CD4-positive, alpha-beta T cell (primary cell): ENCODE measurements at regions of chr2 and their contacts with region 1.

Region 1: DNA sequence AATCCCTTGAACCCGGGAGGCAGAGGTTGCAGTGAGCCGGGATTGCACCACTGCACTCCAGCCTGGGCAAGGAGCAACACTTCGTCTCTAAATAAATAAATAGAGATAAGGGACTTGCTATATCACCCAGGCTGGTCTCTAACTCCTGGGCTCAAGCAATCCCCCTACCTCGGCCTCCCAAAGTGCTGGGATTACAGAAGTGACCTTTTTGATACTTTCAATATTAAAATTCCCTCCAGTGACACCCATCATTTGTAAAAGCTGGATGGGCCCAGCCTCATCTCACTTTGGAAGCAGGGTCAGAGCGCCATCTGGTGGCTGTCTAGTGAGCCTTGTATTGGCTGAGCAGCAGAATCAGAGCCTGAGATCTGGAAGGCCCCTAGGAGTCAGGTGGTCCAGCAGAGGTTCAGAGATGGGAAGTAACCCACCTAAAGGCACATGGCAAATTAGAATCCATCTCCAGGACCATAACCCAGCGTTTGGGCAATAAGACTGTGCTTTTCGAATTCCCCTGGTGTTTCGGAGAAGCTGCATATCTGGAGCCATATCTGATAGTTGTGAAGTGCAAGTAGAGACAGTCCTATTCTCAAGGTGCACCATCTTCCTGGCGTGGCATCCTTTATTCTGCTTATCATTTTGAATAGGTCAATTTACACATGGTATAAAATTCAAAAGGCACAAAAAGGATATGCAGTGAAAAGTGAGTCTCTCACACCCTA is 18.3 kb upstream of the SLC35F6 start:
- DNase-seq: peak; percentile 61 to 87 (median 72)
- ATAC-seq: peak; percentile 78
- H3K4me3 ChIP-seq: no peak overlapping the region
- H3K4me3 Mint-ChIP-seq: no peak overlapping the region
- H3K27ac ChIP-seq: no peak overlapping the region
- H3K27ac Mint-ChIP-seq: no peak overlapping the region
- H3K4me1 ChIP-seq: no peaks in the 10 kb centered on the region
- H3K4me1 Mint-ChIP-seq: peaks cover 4% of the 10 kb centered on the region
- H3K27me3 ChIP-seq: no peaks in the 10 kb centered on the region
- H3K27me3 Mint-ChIP-seq: no peaks in the 10 kb centered on the region
- CTCF ChIP-seq: peak; percentile 93

Region 2: DNA sequence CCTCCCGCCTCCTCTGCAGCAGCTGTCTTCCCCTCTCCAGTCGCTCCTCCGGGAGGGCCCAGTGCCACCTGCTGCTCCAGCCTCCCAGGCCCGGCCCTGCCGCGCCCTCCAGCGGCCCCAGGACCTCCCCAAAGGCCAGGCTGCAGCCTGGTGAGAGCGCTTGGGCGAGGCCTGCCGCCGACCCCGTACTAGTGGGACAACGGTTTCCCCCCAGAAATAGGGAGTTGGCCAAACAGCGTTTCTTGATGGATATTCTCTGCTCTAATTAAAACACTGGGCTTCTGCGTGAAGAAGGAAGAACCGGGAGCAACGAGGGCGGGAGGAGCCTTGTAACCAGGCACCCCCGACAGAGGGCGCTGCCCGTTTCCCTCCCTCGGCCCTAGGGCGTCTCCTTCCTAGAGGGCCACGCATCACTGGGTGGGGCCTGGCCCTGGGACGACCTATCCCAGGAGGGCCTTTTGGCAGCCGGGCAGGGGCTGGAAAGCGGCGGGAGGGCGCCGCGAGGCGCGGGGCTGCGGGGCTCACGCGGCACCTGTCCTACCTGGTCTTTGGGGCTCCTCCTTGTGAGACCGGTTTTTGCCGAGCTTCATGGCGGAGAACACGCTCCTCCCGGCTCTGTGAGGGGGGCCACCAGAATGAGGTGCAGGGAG is 242.4 kb before region 1 on chr2:
- CTCF ChIA-PET with region 1: no interaction called
- POLR2A ChIA-PET with region 1: no interaction called
- intact Hi-C with region 1: loop called in 1 of 2 experiments (anchors 1 kb)
- DNase-seq: peak; percentile 62 to 85 (median 72)
- ATAC-seq: peak; percentile 99
- H3K4me3 ChIP-seq: peak overlapping the region; percentile 53
- H3K4me3 Mint-ChIP-seq: peak overlapping the region; percentile 75
- H3K27ac ChIP-seq: no peak overlapping the region
- H3K27ac Mint-ChIP-seq: no peak overlapping the region
- H3K4me1 ChIP-seq: peaks cover 13% of the 10 kb centered on the region
- H3K4me1 Mint-ChIP-seq: peaks cover 7% of the 10 kb centered on the region
- H3K27me3 ChIP-seq: peaks cover 0 to 2% of the 10 kb centered on the region in 2 experiments
- H3K27me3 Mint-ChIP-seq: no peaks in the 10 kb centered on the region
- CTCF ChIP-seq: peak; percentile 93

Region 3: GRCh38 chr2:26685989-26686839 is 59.6 kb before region 1 on chr2:
- CTCF ChIA-PET with region 1: no interaction called
- POLR2A ChIA-PET with region 1: no interaction called
- intact Hi-C with region 1: no loop called
- DNase-seq: no peak
- ATAC-seq: no peak
- H3K4me3 ChIP-seq: no peak overlapping the region
- H3K4me3 Mint-ChIP-seq: no peak overlapping the region
- H3K27ac ChIP-seq: no peak overlapping the region
- H3K27ac Mint-ChIP-seq: no peak overlapping the region
- H3K4me1 ChIP-seq: no peaks in the 10 kb centered on the region
- H3K4me1 Mint-ChIP-seq: no peaks in the 10 kb centered on the region
- H3K27me3 ChIP-seq: peaks cover 28 to 29% of the 10 kb centered on the region in 2 experiments
- H3K27me3 Mint-ChIP-seq: peaks cover 79% of the 10 kb centered on the region
- CTCF ChIP-seq: no peak